ENCODE measurements at regions of chr2 and their contacts with region 1.

Region 1: DNA sequence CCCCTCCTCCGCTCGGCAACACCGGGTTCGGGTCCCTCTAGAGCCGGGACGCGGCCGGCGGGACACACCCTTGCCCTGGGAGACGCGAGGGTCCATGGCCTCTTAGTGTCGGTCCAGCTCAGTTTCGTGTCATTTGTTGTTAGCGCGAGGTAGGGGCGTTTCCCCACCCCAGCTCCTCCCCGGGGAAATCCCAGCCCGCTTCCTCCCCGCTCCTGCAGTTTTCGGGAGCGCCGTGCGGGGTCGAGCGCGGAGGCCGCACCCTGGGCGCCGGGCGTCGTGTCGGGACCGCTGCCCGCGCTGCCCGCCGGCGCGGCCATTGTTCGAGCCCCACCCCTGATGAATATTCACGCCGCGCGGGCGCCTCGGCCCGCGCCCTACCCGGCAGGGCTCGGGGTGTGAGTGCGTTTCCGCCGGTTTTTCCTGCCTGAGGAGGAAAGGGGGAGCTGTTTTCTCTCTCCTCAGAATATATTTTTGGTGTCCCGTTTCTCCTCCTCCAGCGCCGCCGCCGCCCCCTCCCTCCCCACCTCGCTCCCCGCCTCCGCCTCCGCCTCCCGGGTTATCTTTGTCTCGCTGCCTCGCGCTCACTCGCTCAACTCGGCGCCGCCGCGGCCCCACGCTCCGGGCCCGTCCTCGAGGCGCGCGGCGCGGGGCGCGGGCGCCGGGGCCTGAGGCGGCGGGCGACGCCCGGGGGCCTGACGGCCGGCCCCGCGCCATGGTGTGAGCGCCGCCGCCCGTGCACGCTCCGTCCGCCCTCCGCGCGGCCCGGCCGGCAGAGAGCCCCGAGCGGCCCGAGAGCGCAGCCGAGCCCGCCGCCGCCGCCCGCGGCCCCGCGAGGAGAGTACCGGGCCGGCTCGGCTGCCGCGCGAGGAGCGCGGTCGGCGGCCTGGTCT is at the start of gene MAP4K4:
- DNase-seq: peak; percentile 56 to 81 (median 70)
- ATAC-seq: peak; percentile 76
- H3K4me3 ChIP-seq: peak within 1 kb of the TSS; percentile 89
- H3K4me3 Mint-ChIP-seq: peak within 1 kb of the TSS in 6 of 10 donors; percentile 82 to 98 (median 96)
- H3K27ac ChIP-seq: peak within 1 kb of the TSS; percentile 79
- H3K27ac Mint-ChIP-seq: peak within 1 kb of the TSS; percentile 88 to 98 (median 93)
- H3K4me1 ChIP-seq: peaks cover 19 to 21% of the 10 kb centered on the region in 2 donors
- H3K4me1 Mint-ChIP-seq: peaks cover 11 to 41% (median 26%) of the 10 kb centered on the region in 7 donors
- H3K27me3 ChIP-seq: no peaks in the 10 kb centered on the region
- H3K27me3 Mint-ChIP-seq: no peaks in the 10 kb centered on the region
- total RNA-seq, gene MAP4K4: 104 to 138 (median 128) TPM

Region 2: DNA sequence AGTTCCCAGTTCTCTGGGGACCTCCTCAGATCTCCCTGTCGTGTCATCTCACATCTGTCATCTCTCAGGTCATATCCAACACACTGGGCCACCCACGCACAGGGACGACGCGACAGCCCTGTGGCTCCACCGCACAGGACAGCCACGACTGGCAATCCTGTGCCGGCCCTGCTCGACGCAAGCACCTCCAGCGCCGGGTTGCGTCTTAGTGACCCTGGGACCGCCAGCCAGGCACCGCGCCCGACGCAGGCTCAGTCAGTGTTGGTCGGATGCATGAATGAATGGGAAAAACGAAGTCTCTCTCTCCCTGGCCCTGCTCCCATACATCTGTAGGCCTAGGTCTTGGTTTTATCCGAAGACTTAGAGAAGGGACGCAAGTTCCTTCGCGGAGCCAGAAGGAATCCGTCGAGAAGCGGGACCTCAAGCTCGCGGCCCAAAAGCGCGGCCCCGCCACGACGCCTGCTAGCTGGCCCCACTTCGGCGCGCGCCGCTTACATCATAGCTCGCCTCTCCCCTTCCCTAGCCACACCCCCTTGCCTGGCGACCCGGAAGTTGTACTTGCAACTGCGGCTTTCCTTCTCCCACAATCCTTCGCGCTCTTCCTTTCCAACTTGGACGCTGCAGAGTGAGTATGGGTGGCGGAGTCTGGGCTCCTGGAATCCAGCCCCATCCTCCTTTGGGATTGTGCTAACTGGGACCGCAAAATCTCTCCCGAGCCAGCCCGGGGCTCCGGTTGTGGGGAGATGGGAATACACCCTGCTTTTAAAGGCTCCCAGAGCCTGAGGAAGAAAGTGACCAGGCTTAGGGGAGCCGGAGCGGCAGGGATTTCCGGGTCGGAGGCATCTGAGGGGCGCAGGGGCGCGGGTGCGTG is 695.4 kb before region 1 on chr2 and contains the start of gene RPL31:
- CTCF ChIA-PET with region 1: no interaction called
- POLR2A ChIA-PET with region 1: no interaction called
- intact Hi-C with region 1: loop called (anchors 2 to 10 kb)
- DNase-seq: peak; percentile 86 to 97 (median 95)
- ATAC-seq: peak; percentile 99
- H3K4me3 ChIP-seq: peak within 1 kb of the TSS; percentile 93
- H3K4me3 Mint-ChIP-seq: peak within 1 kb of the TSS; percentile 91 to 99 (median 95)
- H3K27ac ChIP-seq: peak within 1 kb of the TSS; percentile 86
- H3K27ac Mint-ChIP-seq: peak within 1 kb of the TSS; percentile 88 to 99 (median 98)
- H3K4me1 ChIP-seq: peaks cover 16 to 18% of the 10 kb centered on the region in 2 donors
- H3K4me1 Mint-ChIP-seq: peaks cover 32 to 48% (median 44%) of the 10 kb centered on the region in 7 donors
- H3K27me3 ChIP-seq: no peaks in the 10 kb centered on the region
- H3K27me3 Mint-ChIP-seq: peaks cover 0 to 5% (median 0%) of the 10 kb centered on the region in 5 donors
- total RNA-seq, gene RPL31: 1,182 to 2,835 (median 2,548) TPM

Region 3: DNA sequence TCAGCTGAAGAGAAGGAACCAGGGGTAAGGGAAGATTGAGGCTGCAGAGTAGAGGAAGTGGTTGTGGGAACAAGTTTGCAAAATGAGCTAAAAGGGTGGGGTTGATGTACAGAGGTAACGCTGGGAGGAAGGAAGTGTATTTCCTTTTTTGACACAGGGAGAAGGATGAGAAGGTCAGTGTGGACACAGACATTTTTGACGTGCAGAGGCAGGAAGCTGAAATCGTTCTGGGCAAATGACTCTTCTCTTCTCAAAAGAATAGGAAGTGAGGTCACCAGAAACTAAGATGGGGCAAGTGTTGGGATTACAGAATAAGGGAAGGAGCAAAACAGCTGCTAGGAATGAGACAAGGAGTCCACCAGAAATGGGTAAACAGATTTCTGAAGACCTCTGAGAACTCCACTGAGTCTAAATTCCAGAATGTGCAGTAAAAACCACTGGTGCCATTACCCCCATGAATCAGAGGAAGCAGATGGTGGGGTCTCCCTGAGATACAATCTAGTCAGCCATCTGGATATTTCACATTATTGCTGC is 368.8 kb before region 1 on chr2:
- CTCF ChIA-PET with region 1: no interaction called
- POLR2A ChIA-PET with region 1: no interaction called
- intact Hi-C with region 1: loop called in 1 of 2 experiments (anchors 5 kb)
- DNase-seq: peak in 7 of 9 donors; percentile 43 to 84 (median 81)
- ATAC-seq: peak; percentile 94
- H3K4me3 ChIP-seq: peak overlapping the region; percentile 43
- H3K4me3 Mint-ChIP-seq: no peak overlapping the region
- H3K27ac ChIP-seq: peak overlapping the region; percentile 49
- H3K27ac Mint-ChIP-seq: no peak overlapping the region
- H3K4me1 ChIP-seq: peaks cover 34 to 60% of the 10 kb centered on the region in 2 donors
- H3K4me1 Mint-ChIP-seq: peaks cover 8 to 29% (median 23%) of the 10 kb centered on the region in 7 donors
- H3K27me3 ChIP-seq: no peaks in the 10 kb centered on the region
- H3K27me3 Mint-ChIP-seq: no peaks in the 10 kb centered on the region

Region 4: GRCh38 chr2:101501443-101501842 is 195.9 kb before region 1 on chr2:
- CTCF ChIA-PET with region 1: no interaction called
- POLR2A ChIA-PET with region 1: no interaction called
- intact Hi-C with region 1: loop called in 1 of 2 experiments (anchors 1 kb)
- DNase-seq: no peak
- ATAC-seq: no peak
- H3K4me3 ChIP-seq: no peak overlapping the region
- H3K4me3 Mint-ChIP-seq: peak overlapping the region in 4 of 10 donors; percentile 42 to 63 (median 48)
- H3K27ac ChIP-seq: no peak overlapping the region
- H3K27ac Mint-ChIP-seq: peak overlapping the region in 3 of 9 donors; percentile 57 to 76 (median 59)
- H3K4me1 ChIP-seq: no peaks in the 10 kb centered on the region
- H3K4me1 Mint-ChIP-seq: peaks cover 9 to 22% (median 15%) of the 10 kb centered on the region in 7 donors
- H3K27me3 ChIP-seq: no peaks in the 10 kb centered on the region
- H3K27me3 Mint-ChIP-seq: peaks cover 0 to 3% (median 0%) of the 10 kb centered on the region in 5 donors

Region 5: GRCh38 chr2:101665312-101665711 is 32.1 kb before region 1 on chr2:
- CTCF ChIA-PET with region 1: no interaction called
- POLR2A ChIA-PET with region 1: no interaction called
- intact Hi-C with region 1: no loop called
- DNase-seq: no peak
- ATAC-seq: no peak
- H3K4me3 ChIP-seq: no peak overlapping the region
- H3K4me3 Mint-ChIP-seq: no peak overlapping the region
- H3K27ac ChIP-seq: no peak overlapping the region
- H3K27ac Mint-ChIP-seq: no peak overlapping the region
- H3K4me1 ChIP-seq: no peaks in the 10 kb centered on the region
- H3K4me1 Mint-ChIP-seq: peaks cover 0 to 4% (median 0%) of the 10 kb centered on the region in 7 donors
- H3K27me3 ChIP-seq: no peaks in the 10 kb centered on the region
- H3K27me3 Mint-ChIP-seq: no peaks in the 10 kb centered on the region

Region 6: GRCh38 chr2:101710471-101711318 is 13.3 kb after region 1 on chr2:
- CTCF ChIA-PET with region 1: interaction called, 4 read pairs
- POLR2A ChIA-PET with region 1: interaction called, 16 read pairs
- intact Hi-C with region 1: loop called in 1 of 2 experiments (anchors 1 kb)
- DNase-seq: no peak
- ATAC-seq: peak; percentile 71
- H3K4me3 ChIP-seq: no peak overlapping the region
- H3K4me3 Mint-ChIP-seq: peak overlapping the region in 9 of 10 donors; percentile 14 to 73 (median 53)
- H3K27ac ChIP-seq: peak overlapping the region; percentile 69
- H3K27ac Mint-ChIP-seq: peak overlapping the region in 7 of 9 donors; percentile 40 to 95 (median 78)
- H3K4me1 ChIP-seq: peaks cover 66 to 72% of the 10 kb centered on the region in 2 donors
- H3K4me1 Mint-ChIP-seq: peaks cover 36 to 86% (median 59%) of the 10 kb centered on the region in 7 donors
- H3K27me3 ChIP-seq: no peaks in the 10 kb centered on the region
- H3K27me3 Mint-ChIP-seq: no peaks in the 10 kb centered on the region

Region 7: DNA sequence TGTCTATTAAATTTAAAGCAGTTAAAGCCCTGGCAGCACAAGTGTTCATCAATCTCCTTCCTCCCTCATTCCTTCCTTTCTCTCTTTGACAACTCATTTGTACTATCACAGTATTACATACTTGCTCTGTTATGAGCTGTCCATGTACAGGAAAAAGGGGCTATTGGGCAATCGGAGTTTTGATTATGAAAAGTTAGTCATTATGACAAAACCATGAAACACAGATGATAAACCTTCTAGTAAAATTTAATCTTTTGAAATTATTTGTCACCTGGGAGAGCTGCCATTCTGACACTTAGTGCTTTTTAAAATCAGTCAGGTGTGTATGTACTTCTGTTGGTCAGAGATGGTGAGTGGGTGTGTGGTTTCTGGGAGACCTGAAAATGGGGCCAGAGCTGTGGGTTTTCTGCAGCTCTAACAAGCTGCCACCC is 39.5 kb after region 1 on chr2:
- CTCF ChIA-PET with region 1: no interaction called
- POLR2A ChIA-PET with region 1: interaction called, 6 read pairs
- intact Hi-C with region 1: loop called (anchors 5 kb)
- DNase-seq: no peak
- ATAC-seq: peak; percentile 64
- H3K4me3 ChIP-seq: no peak overlapping the region
- H3K4me3 Mint-ChIP-seq: peak overlapping the region in 7 of 10 donors; percentile 1 to 60 (median 17)
- H3K27ac ChIP-seq: no peak overlapping the region
- H3K27ac Mint-ChIP-seq: peak overlapping the region; percentile 3 to 89 (median 56)
- H3K4me1 ChIP-seq: peaks cover 43 to 59% of the 10 kb centered on the region in 2 donors
- H3K4me1 Mint-ChIP-seq: peaks cover 60 to 98% (median 93%) of the 10 kb centered on the region in 7 donors
- H3K27me3 ChIP-seq: no peaks in the 10 kb centered on the region
- H3K27me3 Mint-ChIP-seq: no peaks in the 10 kb centered on the region

Region 8: DNA sequence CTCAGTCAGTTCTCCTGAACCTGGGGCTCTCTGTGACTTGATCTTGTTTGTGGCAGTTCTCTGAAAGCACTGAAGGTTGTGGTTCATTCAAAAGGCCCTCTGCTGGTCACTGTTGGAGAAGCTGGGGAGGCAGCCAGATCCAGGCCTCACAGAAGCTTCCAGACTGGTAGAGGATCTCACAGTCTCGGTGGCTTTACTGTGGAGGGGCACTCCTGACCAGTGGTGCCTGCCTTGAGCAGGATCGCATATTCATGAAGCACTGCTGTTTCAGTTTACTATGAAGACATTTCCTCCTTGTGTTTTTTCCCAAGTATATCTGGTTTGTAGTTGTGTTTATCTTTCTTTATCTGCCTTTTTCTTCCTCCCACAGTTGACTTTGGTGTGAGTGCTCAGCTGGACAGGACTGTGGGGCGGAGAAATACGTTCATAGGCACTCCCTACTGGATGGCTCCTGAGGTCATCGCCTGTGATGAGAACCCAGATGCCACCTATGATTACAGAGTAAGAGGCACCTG is 134.0 kb after region 1 on chr2:
- CTCF ChIA-PET with region 1: interaction called, 10 read pairs
- POLR2A ChIA-PET with region 1: interaction called, 25 read pairs
- intact Hi-C with region 1: loop called in 1 of 2 experiments (anchors 1 kb)
- DNase-seq: peak; percentile 17 to 68 (median 62)
- ATAC-seq: peak; percentile 76
- H3K4me3 ChIP-seq: no peak overlapping the region
- H3K4me3 Mint-ChIP-seq: peak overlapping the region in 8 of 10 donors; percentile 12 to 77 (median 60)
- H3K27ac ChIP-seq: no peak overlapping the region
- H3K27ac Mint-ChIP-seq: peak overlapping the region in 8 of 9 donors; percentile 7 to 88 (median 72)
- H3K4me1 ChIP-seq: peaks cover 13 to 44% of the 10 kb centered on the region in 2 donors
- H3K4me1 Mint-ChIP-seq: peaks cover 45 to 56% (median 54%) of the 10 kb centered on the region in 7 donors
- H3K27me3 ChIP-seq: no peaks in the 10 kb centered on the region
- H3K27me3 Mint-ChIP-seq: no peaks in the 10 kb centered on the region